BJ (cell line): ENCODE measurements at regions of chr3 and their contacts with region 1.

Region 1: GRCh38 chr3:5041315-5041714 is 62.1 kb downstream of the BHLHE40 start:
- DNase-seq: no peak
- H3K4me3 ChIP-seq: no peak overlapping the region
- H3K27me3 ChIP-seq: peaks cover 2% of the 10 kb centered on the region; the same call in 1 of the 2 replicates
- CTCF ChIP-seq: no peak

Region 2: DNA sequence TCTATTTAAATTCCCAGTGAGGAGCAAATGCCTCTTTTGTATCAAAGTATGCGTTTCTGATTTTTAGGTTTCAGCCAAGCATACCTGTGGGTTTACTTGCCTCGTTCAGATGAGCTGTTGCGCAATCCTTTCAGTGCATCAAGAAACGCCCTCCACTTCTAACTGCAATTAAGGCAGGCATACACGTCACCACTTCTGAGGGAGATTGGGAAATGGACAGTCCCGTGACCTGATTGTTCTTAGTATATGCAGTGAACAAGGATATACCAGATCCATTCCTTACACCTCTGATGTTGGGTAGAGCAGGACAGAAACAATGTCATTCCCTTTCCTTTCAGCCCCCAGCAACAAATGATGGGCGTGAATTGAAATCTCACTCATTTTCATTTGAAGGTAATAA is 329.2 kb before region 1 on chr3:
- CTCF ChIA-PET with region 1: interaction called, 10 read pairs
- POLR2A ChIA-PET with region 1: no interaction called
- DNase-seq: no peak
- H3K4me3 ChIP-seq: no peak overlapping the region
- H3K27me3 ChIP-seq: no peaks in the 10 kb centered on the region
- CTCF ChIP-seq: no peak

Region 3: GRCh38 chr3:5078151-5078550 is 36.8 kb after region 1 on chr3:
- CTCF ChIA-PET with region 1: no interaction called
- POLR2A ChIA-PET with region 1: no interaction called
- DNase-seq: no peak
- H3K4me3 ChIP-seq: no peak overlapping the region
- H3K27me3 ChIP-seq: peaks cover 1% of the 10 kb centered on the region; the same call in 1 of the 2 replicates
- CTCF ChIP-seq: no peak

Region 4: DNA sequence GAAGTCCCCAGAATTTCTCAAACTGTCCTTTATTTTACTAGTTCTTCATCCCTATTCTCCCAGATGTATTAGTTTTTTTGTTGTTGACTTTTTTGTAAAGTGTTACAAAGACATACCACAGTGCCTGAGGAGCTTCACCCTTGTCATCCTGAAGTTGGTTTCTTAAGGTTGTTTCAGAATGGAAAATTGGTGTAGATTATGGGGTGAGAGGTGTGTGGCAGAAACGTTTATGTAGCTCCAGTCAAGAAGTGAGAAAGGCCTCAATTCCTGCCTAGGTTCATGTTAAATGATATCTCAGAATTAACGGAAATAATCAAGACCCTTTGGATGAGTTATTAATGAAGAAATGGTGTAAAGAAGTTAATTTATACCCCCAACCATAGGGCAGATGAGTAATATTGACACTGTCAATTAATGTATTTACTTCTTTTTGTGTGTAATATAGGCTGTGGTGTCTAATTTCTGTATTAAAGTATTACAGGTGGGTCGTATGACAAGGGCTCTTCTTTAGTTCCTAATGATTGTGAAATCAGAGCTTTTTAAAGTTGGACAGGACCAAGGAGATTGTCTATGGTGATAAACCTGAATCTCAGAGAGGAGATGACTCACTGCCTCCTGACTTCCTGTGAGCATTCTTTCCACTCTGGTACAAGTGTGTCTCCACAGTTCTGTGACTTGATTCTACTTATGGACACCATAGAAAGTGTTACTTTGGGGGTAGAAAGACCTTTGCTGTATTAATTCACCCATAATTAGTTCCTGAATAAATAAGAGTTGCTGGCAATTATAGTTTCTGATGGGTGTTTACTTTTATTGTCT is 153.2 kb after region 1 on chr3:
- CTCF ChIA-PET with region 1: no interaction called
- POLR2A ChIA-PET with region 1: interaction called, 10 read pairs
- DNase-seq: peak; percentile 68
- H3K4me3 ChIP-seq: no peak overlapping the region
- H3K27me3 ChIP-seq: no peaks in the 10 kb centered on the region
- CTCF ChIP-seq: no peak